Panc1 (cell line): ENCODE measurements at regions of chr3 and their contacts with region 1.

Region 1: GRCh38 chr3:100719136-100719535 is 9.8 kb downstream of the TFG start:
- DNase-seq: no peak
- ATAC-seq: no peak
- H3K4me3 ChIP-seq: no peak overlapping the region
- H3K27ac ChIP-seq: no peak overlapping the region
- H3K4me1 ChIP-seq: 0 out of 2 replicates have a peak, but pooled peaks cover 4% of the 10 kb centered on the region
- H3K27me3 ChIP-seq: no peaks in the 10 kb centered on the region
- CTCF ChIP-seq: no peak

Region 2: GRCh38 chr3:99984139-99984538 is 735.0 kb before region 1 on chr3:
- CTCF ChIA-PET with region 1: no interaction called
- POLR2A ChIA-PET with region 1: interaction called, 13 read pairs
- in situ Hi-C with region 1: no loop called
- intact Hi-C with region 1: no loop called
- DNase-seq: no peak
- ATAC-seq: no peak
- H3K4me3 ChIP-seq: no peak overlapping the region
- H3K27ac ChIP-seq: no peak overlapping the region
- H3K4me1 ChIP-seq: no peaks in the 10 kb centered on the region
- H3K27me3 ChIP-seq: no peaks in the 10 kb centered on the region
- CTCF ChIP-seq: no peak

Region 3: GRCh38 chr3:101433653-101434052 is 714.5 kb after region 1 on chr3:
- CTCF ChIA-PET with region 1: no interaction called
- POLR2A ChIA-PET with region 1: interaction called, 15 read pairs
- in situ Hi-C with region 1: no loop called
- intact Hi-C with region 1: no loop called
- DNase-seq: no peak
- ATAC-seq: no peak
- H3K4me3 ChIP-seq: no peak overlapping the region
- H3K27ac ChIP-seq: no peak overlapping the region
- H3K4me1 ChIP-seq: no peaks in the 10 kb centered on the region
- H3K27me3 ChIP-seq: no peaks in the 10 kb centered on the region
- CTCF ChIP-seq: no peak